Caco-2 (cell line): ENCODE measurements at regions of chr12 and their contacts with region 1.

Region 1: GRCh38 chr12:3202734-3203446 is 125.7 kb downstream of the TSPAN9 start:
- DNase-seq: peak; percentile 69 to 83
- H3K4me3 ChIP-seq: no peak overlapping the region
- H3K4me3 Mint-ChIP-seq: no peak overlapping the region
- H3K27ac Mint-ChIP-seq: no peak overlapping the region
- H3K4me1 ChIP-seq: 0 out of 2 replicates have a peak, but pooled peaks cover 7% of the 10 kb centered on the region
- H3K4me1 Mint-ChIP-seq: peaks cover 13% of the 10 kb centered on the region
- H3K27me3 ChIP-seq: no peaks in the 10 kb centered on the region
- H3K27me3 Mint-ChIP-seq: peaks cover 8% of the 10 kb centered on the region
- CTCF ChIP-seq: peak; percentile 97 to 99

Region 2: GRCh38 chr12:2936301-2936700 is 266.6 kb before region 1 on chr12:
- CTCF ChIA-PET with region 1: no interaction called
- POLR2A ChIA-PET with region 1: no interaction called
- intact Hi-C with region 1: no loop called
- DNase-seq: no peak
- H3K4me3 ChIP-seq: no peak overlapping the region
- H3K4me3 Mint-ChIP-seq: no peak overlapping the region
- H3K27ac Mint-ChIP-seq: no peak overlapping the region
- H3K4me1 ChIP-seq: no peaks in the 10 kb centered on the region
- H3K4me1 Mint-ChIP-seq: no peaks in the 10 kb centered on the region
- H3K27me3 ChIP-seq: no peaks in the 10 kb centered on the region
- H3K27me3 Mint-ChIP-seq: no peaks in the 10 kb centered on the region
- CTCF ChIP-seq: no peak

Region 3: DNA sequence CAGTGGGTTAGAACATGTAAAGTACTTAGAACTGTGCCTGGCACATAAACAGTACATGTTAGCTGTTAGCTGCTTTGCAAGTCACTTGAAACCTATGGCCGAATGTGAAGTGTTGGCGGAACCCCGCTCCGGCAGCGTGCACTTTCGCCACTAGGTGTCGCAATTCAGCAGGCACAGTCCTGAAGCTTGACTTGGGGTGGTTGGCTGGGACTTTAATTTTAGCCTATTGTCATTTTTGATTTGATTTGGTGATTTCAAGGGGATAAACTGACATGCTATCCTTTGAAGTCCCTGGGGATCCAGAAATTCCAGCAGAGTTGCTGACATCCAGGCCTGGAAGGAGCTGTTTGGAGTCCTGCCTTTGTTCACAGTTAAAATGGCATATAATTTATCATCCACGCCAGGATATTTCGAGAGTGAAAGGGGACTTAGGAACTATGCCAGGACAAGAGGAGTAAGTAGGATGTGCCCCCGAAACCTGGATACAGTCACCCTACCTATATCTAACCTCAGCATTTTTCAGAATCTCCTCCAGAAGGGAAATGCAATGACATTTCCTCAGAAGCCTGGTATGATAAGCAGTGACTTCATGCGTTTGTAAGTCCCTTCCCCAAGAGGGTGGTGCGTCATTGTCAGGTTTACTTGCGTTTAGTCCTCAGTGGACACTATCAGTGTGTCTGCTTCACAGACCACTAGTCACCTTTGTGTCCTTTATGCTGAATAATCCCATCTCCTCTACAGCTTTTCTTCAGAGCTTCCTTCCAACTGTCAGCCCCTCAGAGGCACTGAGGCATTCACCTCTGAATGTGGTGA is 129.2 kb before region 1 on chr12:
- CTCF ChIA-PET with region 1: interaction called, 4 read pairs
- POLR2A ChIA-PET with region 1: no interaction called
- intact Hi-C with region 1: loop called (anchors 1 kb)
- DNase-seq: peak; percentile 87 to 93
- H3K4me3 ChIP-seq: no peak overlapping the region
- H3K4me3 Mint-ChIP-seq: no peak overlapping the region
- H3K27ac Mint-ChIP-seq: no peak overlapping the region
- H3K4me1 ChIP-seq: peaks cover 5% of the 10 kb centered on the region
- H3K4me1 Mint-ChIP-seq: peaks cover 14% of the 10 kb centered on the region
- H3K27me3 ChIP-seq: no peaks in the 10 kb centered on the region
- H3K27me3 Mint-ChIP-seq: no peaks in the 10 kb centered on the region
- CTCF ChIP-seq: peak; percentile 98 to 99

Region 4: GRCh38 chr12:3135522-3136461 is 67.1 kb before region 1 on chr12:
- CTCF ChIA-PET with region 1: interaction called, 5 read pairs
- POLR2A ChIA-PET with region 1: interaction called, 3 read pairs
- intact Hi-C with region 1: loop called (anchors 1 kb)
- DNase-seq: peak; percentile 76 to 77
- H3K4me3 ChIP-seq: no peak overlapping the region
- H3K4me3 Mint-ChIP-seq: no peak overlapping the region
- H3K27ac Mint-ChIP-seq: no peak overlapping the region
- H3K4me1 ChIP-seq: no peaks in the 10 kb centered on the region
- H3K4me1 Mint-ChIP-seq: no peaks in the 10 kb centered on the region
- H3K27me3 ChIP-seq: no peaks in the 10 kb centered on the region
- H3K27me3 Mint-ChIP-seq: no peaks in the 10 kb centered on the region
- CTCF ChIP-seq: peak; percentile 85 to 94

Region 5: DNA sequence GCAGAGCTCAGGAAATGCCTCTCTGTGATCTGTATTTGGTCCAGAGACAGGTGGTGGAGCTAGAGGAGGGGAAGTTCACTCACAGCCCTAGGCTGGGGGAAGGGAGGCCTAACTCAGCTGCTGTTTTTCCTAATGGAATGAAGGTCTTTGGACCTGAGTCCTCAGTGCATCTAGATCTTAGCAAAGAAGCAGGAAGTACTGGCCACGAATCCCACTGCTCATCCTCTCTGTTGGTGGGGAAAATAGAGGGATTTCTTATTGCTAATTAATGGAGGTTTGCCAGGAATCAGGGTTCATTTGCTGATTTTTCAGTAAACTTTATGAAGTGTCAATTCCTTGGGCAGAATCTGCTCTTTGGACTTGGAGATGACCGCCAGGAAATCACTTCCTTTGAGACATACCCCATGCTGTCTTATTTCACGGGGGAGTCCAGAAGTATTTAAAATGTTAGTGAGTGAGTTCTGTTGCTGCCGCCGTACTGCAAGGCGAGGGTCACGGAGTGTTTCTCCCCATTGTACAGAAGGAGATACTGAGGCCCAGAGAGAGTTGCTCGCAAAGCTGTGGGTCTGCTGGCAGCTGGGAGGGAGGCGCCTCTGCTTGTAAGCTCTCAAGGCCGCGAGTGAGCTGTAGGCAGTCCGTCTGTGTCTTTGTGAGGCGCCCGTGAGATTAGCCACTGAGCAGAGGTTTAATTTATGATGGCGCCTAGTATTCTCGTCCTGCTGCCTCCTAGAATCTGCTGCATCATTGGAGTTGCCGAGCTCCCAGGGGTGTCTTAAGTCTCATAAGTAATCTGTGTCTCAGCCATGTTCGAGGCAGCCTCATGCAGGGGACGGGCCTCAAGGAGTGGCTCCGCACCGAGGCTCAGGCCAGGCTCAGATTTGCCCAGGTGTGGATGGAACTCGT is 37.6 kb before region 1 on chr12:
- CTCF ChIA-PET with region 1: interaction called, 6 read pairs
- POLR2A ChIA-PET with region 1: no interaction called
- intact Hi-C with region 1: loop called (anchors 1 kb)
- DNase-seq: peak; percentile 69 to 79
- H3K4me3 ChIP-seq: no peak overlapping the region
- H3K4me3 Mint-ChIP-seq: no peak overlapping the region
- H3K27ac Mint-ChIP-seq: no peak overlapping the region
- H3K4me1 ChIP-seq: peaks cover 13% of the 10 kb centered on the region
- H3K4me1 Mint-ChIP-seq: peaks cover 2% of the 10 kb centered on the region
- H3K27me3 ChIP-seq: no peaks in the 10 kb centered on the region
- H3K27me3 Mint-ChIP-seq: no peaks in the 10 kb centered on the region
- CTCF ChIP-seq: peak in 1 of 2 experiments; percentile 27

Region 6: DNA sequence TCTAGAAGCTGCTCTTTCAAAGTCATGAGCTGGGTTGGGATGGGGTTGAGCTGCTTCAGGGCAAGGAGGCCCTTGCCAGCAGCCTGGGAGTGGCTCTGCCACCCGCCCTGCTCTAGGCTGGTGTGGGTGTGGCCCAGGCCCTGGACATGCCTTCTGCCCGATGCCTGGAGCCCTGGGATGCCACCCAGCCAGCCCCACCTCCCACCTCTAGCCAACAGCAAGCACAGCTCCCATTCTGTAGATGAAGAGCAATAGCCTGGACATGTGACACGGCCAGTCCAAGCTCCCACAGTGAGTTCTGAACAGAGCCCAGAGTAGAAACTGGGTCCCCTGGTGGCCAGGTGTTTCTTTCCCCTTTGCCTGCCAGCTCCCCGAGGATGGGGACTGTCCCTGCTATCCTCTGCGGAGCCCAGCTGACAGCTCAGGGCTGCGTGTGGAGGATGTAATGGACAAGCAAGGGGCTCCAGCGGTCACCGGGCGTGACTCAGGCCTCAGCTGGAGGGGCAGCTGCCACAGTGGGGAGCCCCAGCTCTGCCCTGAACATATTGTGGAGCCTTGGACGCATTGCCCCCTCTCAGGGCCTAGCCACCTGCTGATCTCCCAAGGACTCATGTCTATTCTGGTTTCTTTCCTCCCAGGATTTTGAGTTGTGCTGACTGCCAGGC is 39.4 kb after region 1 on chr12:
- CTCF ChIA-PET with region 1: interaction called, 4 read pairs
- POLR2A ChIA-PET with region 1: no interaction called
- intact Hi-C with region 1: loop called (anchors 5 kb)
- DNase-seq: peak in 1 of 2 experiments; percentile 43
- H3K4me3 ChIP-seq: no peak overlapping the region
- H3K4me3 Mint-ChIP-seq: no peak overlapping the region
- H3K27ac Mint-ChIP-seq: peak overlapping the region; percentile 11
- H3K4me1 ChIP-seq: peaks cover 24% of the 10 kb centered on the region
- H3K4me1 Mint-ChIP-seq: peaks cover 13% of the 10 kb centered on the region
- H3K27me3 ChIP-seq: no peaks in the 10 kb centered on the region
- H3K27me3 Mint-ChIP-seq: no peaks in the 10 kb centered on the region
- CTCF ChIP-seq: peak in 1 of 2 experiments; percentile 7

Region 7: GRCh38 chr12:3275171-3276041 is 72.5 kb after region 1 on chr12:
- CTCF ChIA-PET with region 1: interaction called, 26 read pairs
- POLR2A ChIA-PET with region 1: no interaction called
- intact Hi-C with region 1: loop called (anchors 2 kb)
- DNase-seq: peak; percentile 68 to 86
- H3K4me3 ChIP-seq: no peak overlapping the region
- H3K4me3 Mint-ChIP-seq: no peak overlapping the region
- H3K27ac Mint-ChIP-seq: no peak overlapping the region
- H3K4me1 ChIP-seq: no peaks in the 10 kb centered on the region
- H3K4me1 Mint-ChIP-seq: no peaks in the 10 kb centered on the region
- H3K27me3 ChIP-seq: no peaks in the 10 kb centered on the region
- H3K27me3 Mint-ChIP-seq: no peaks in the 10 kb centered on the region
- CTCF ChIP-seq: peak; percentile 99